ENCODE measurements at regions of chr5 and their contacts with region 1.

Region 1: DNA sequence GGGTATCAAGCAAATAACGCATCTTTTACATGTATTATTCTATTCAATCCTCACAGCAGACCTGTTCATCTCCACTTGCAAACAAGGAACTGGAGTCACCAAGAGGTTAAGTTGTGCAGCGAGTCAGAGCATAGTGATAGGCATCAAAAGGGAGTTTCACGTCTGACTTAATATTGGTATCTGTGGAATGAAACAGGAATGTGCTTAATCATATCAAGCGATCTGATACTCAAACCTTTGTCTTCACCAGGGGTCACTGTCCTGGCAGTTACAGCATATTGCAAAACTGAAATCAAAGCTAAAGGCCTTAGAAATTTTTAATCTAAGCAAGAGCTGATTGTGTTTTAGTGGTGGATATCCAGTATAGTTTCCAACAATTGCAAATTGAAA is 271.6 kb downstream of the PLK2 start:
- DNase-seq: peak; percentile 60 to 99
- H3K4me3 ChIP-seq: peak overlapping the region; percentile 1; the same call in 1 of the 2 replicates
- H3K27ac ChIP-seq: peak overlapping the region; percentile 94
- H3K4me1 ChIP-seq: peaks cover 80% of the 10 kb centered on the region
- H3K27me3 ChIP-seq: no peaks in the 10 kb centered on the region
- CTCF ChIP-seq: no peak

Region 2: GRCh38 chr5:56422076-56422762 is 1766.0 kb before region 1 on chr5:
- CTCF ChIA-PET with region 1: no interaction called
- POLR2A ChIA-PET with region 1: interaction called, 10 read pairs
- intact Hi-C with region 1: no loop called
- DNase-seq: peak; percentile 60 to 82
- H3K4me3 ChIP-seq: no peak overlapping the region
- H3K27ac ChIP-seq: peak overlapping the region; percentile 2; the same call in 1 of the 2 replicates
- H3K4me1 ChIP-seq: peaks cover 24% of the 10 kb centered on the region
- H3K27me3 ChIP-seq: no peaks in the 10 kb centered on the region
- CTCF ChIP-seq: no peak

Region 3: GRCh38 chr5:57650360-57651069 is 537.7 kb before region 1 on chr5:
- CTCF ChIA-PET with region 1: no interaction called
- POLR2A ChIA-PET with region 1: no interaction called
- intact Hi-C with region 1: loop called (anchors 5 kb)
- DNase-seq: peak in 1 of 2 experiments; percentile 70
- H3K4me3 ChIP-seq: no peak overlapping the region
- H3K27ac ChIP-seq: no peak overlapping the region
- H3K4me1 ChIP-seq: no peaks in the 10 kb centered on the region
- H3K27me3 ChIP-seq: no peaks in the 10 kb centered on the region
- CTCF ChIP-seq: peak; percentile 59

Region 4: DNA sequence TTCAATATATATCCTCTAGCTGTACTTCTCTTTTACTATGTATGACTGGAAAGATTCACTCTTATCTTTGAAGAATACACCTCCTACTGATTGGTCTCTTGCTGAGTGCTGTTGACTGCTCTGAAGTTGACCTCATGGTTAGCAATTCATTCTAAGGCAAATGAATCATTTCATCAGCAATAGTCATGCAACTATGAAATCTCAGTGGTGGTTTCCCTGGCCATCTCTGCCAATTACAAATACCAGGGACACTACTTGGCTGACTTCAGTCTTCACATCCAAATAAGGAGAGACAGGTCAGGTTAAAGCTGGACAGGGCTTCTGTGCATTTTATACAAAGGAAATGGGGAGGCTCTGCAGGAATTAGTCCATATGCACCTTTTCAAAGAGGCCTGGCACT is 372.1 kb before region 1 on chr5:
- CTCF ChIA-PET with region 1: no interaction called
- POLR2A ChIA-PET with region 1: interaction called, 11 read pairs
- intact Hi-C with region 1: no loop called
- DNase-seq: peak; percentile 51 to 81
- H3K4me3 ChIP-seq: no peak overlapping the region
- H3K27ac ChIP-seq: peak overlapping the region; percentile 73
- H3K4me1 ChIP-seq: peaks cover 22% of the 10 kb centered on the region
- H3K27me3 ChIP-seq: no peaks in the 10 kb centered on the region
- CTCF ChIP-seq: no peak

Region 5: GRCh38 chr5:58094031-58094430 is 94.2 kb before region 1 on chr5:
- CTCF ChIA-PET with region 1: no interaction called
- POLR2A ChIA-PET with region 1: interaction called, 4 read pairs
- intact Hi-C with region 1: loop called (anchors 1 kb)
- DNase-seq: peak; percentile 72 to 96
- H3K4me3 ChIP-seq: no peak overlapping the region
- H3K27ac ChIP-seq: peak overlapping the region; percentile 92
- H3K4me1 ChIP-seq: peaks cover 25% of the 10 kb centered on the region
- H3K27me3 ChIP-seq: no peaks in the 10 kb centered on the region
- CTCF ChIP-seq: no peak

Region 6: GRCh38 chr5:58156986-58157701 is 31.1 kb before region 1 on chr5:
- CTCF ChIA-PET with region 1: no interaction called
- POLR2A ChIA-PET with region 1: no interaction called
- intact Hi-C with region 1: no loop called
- DNase-seq: no peak
- H3K4me3 ChIP-seq: no peak overlapping the region
- H3K27ac ChIP-seq: no peak overlapping the region
- H3K4me1 ChIP-seq: no peaks in the 10 kb centered on the region
- H3K27me3 ChIP-seq: no peaks in the 10 kb centered on the region
- CTCF ChIP-seq: no peak

Region 7: GRCh38 chr5:58410441-58410840 is 222.2 kb after region 1 on chr5:
- CTCF ChIA-PET with region 1: no interaction called
- POLR2A ChIA-PET with region 1: interaction called, 3 read pairs
- intact Hi-C with region 1: loop called (anchors 1 kb)
- DNase-seq: peak; percentile 18 to 81
- H3K4me3 ChIP-seq: no peak overlapping the region
- H3K27ac ChIP-seq: peak overlapping the region; percentile 87
- H3K4me1 ChIP-seq: peaks cover 59% of the 10 kb centered on the region
- H3K27me3 ChIP-seq: no peaks in the 10 kb centered on the region
- CTCF ChIP-seq: no peak

Measured in PC-9 (cell line).